ENCODE measurements at regions of chrX and their contacts with region 1.

Region 1: GRCh38 chrX:45806410-45807121 is 605.9 kb upstream of the DIPK2B start:
- H3K4me3 Mint-ChIP-seq: peak overlapping the region; percentile 45
- H3K27ac Mint-ChIP-seq: no peak overlapping the region
- H3K4me1 Mint-ChIP-seq: peaks cover 45% of the 10 kb centered on the region
- H3K27me3 Mint-ChIP-seq: peaks cover 2% of the 10 kb centered on the region

Region 2: DNA sequence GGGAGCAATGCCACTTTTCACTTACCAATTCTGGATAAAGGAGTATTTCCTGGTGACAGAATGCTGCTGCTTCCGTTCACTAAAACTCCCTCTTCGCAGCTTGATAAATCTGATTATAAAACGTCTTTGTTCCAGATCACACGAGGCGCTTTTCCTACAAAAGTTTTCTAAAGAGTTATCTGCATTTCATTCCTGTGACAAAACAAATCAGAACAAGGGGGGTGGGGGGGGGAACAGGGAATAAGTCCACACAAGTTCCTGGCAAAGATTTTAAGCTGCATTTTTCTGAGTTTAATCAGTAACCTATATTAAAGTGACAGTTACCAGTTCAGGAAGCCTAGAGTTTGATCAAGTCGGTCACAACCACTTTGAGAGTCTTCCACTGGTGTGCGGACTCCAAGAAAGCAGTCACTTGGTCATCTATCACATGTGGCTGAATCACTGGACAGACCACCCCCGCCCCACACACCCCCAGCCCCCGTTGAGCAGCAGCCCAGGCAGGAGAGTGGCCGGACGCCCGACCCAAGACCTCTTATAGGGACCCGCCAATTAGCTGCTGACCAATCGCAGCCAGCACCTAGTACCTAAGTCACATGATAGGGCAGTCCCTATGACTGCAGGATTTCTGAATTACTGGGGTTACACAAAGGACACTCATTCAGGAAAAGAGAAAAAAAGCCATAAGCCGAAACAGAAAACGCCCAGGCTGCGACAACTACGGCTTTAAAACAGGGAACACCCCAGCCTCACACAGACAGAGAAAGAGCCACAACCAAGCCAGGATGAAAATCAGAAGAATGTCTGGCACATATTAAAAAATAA is 36.6 kb before region 1 on chrX:
- intact Hi-C with region 1: loop called (anchors 5 kb)
- H3K4me3 Mint-ChIP-seq: peak overlapping the region; percentile 67
- H3K27ac Mint-ChIP-seq: peak overlapping the region; percentile 73
- H3K4me1 Mint-ChIP-seq: peaks cover 22% of the 10 kb centered on the region
- H3K27me3 Mint-ChIP-seq: peaks cover 12% of the 10 kb centered on the region

Measured in dendritic cell treated with granulocyte-macrophage colony-stimulating factor and Interleukin-4, amounts not matched to agents 40 ng/mL and 50 ng/mL, for 4 days (primary cell).